MCF 10A (cell line): ENCODE measurements at regions of chr6 and their contacts with region 1.

Region 1: GRCh38 chr6:57021086-57021720 is 25.3 kb upstream of the KIAA1586 start:
- DNase-seq: peak; percentile 42
- H3K4me3 Mint-ChIP-seq: no peak overlapping the region
- H3K27ac Mint-ChIP-seq: no peak overlapping the region
- H3K4me1 Mint-ChIP-seq: no peaks in the 10 kb centered on the region
- H3K27me3 Mint-ChIP-seq: no peaks in the 10 kb centered on the region
- CTCF ChIP-seq: peak; percentile 38

Region 2: DNA sequence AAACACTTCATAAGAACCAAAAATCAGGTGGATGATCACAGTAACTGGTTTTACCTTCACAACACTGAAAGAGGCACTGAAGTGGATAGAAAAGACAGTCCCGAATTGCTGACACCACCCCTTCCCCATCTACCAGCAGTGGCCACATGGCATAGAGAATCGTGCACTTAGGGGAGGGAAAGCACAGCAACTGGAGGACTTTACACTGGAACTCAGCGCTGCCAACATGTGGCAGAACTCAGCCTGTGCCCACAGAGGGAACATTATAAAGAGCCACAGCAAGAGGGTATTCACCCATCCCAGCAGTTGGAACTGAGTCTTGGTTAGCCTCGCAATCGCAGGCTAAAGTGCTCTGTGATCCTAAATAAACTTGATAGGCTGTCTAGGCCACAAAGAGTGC is 18.8 kb after region 1 on chr6:
- CTCF ChIA-PET with region 1: interaction called, 25 read pairs
- POLR2A ChIA-PET with region 1: no interaction called
- intact Hi-C with region 1: no loop called
- DNase-seq: peak; percentile 20
- H3K4me3 Mint-ChIP-seq: no peak overlapping the region
- H3K27ac Mint-ChIP-seq: no peak overlapping the region
- H3K4me1 Mint-ChIP-seq: peaks cover 5% of the 10 kb centered on the region
- H3K27me3 Mint-ChIP-seq: peaks cover 23% of the 10 kb centered on the region
- CTCF ChIP-seq: no peak

Region 3: DNA sequence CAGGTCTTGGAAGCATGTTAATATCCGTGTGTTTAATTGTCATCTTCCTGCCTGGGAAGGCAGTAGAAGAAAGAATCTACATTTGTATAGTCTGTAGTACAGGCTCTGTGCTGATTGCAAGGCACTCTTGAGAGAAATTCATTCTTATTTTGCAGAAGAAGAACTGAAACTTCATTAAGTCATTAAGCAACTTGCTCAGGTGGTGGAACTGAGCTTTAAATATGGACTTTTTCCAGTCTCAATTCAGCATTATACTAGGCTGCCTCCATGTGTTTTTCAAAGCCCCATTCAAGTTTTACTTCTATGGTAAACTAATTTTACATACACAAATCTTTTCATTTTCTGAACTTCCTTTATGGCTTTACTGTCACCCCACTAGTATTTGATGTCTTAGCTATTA is 87.5 kb after region 1 on chr6:
- CTCF ChIA-PET with region 1: no interaction called
- POLR2A ChIA-PET with region 1: no interaction called
- intact Hi-C with region 1: no loop called
- DNase-seq: no peak
- H3K4me3 Mint-ChIP-seq: no peak overlapping the region
- H3K27ac Mint-ChIP-seq: no peak overlapping the region
- H3K4me1 Mint-ChIP-seq: peaks cover 7% of the 10 kb centered on the region
- H3K27me3 Mint-ChIP-seq: no peaks in the 10 kb centered on the region
- CTCF ChIP-seq: no peak